Ascending aorta (tissue), 2 donors: ENCODE measurements at regions of chr2 and their contacts with region 1.

Region 1: GRCh38 chr2:20424300-20425290 is 22.3 kb upstream of the RHOB start:
- DNase-seq: peak in 1 of 2 donors; percentile 79
- H3K4me3 ChIP-seq: no peak overlapping the region
- H3K27ac ChIP-seq: peak overlapping the region; percentile 32 to 43
- H3K4me1 ChIP-seq: peaks cover 16 to 19% of the 10 kb centered on the region in 2 donors
- H3K27me3 ChIP-seq: no peaks in the 10 kb centered on the region
- CTCF ChIP-seq: no peak

Region 2: GRCh38 chr2:20242060-20243006 is 182.3 kb before region 1 on chr2:
- intact Hi-C with region 1: no loop called
- DNase-seq: no peak
- H3K4me3 ChIP-seq: no peak overlapping the region
- H3K27ac ChIP-seq: no peak overlapping the region
- H3K4me1 ChIP-seq: no peaks in the 10 kb centered on the region
- H3K27me3 ChIP-seq: no peaks in the 10 kb centered on the region
- CTCF ChIP-seq: peak in 1 of 3 experiments; percentile 32

Region 3: GRCh38 chr2:20350753-20351554 is 73.6 kb before region 1 on chr2 and contains the start of gene PUM2:
- intact Hi-C with region 1: loop called (anchors 2 kb)
- DNase-seq: peak; percentile 82 to 96
- H3K4me3 ChIP-seq: peak within 1 kb of the TSS; percentile 76 to 94
- H3K27ac ChIP-seq: peak within 1 kb of the TSS; percentile 88 to 93
- H3K4me1 ChIP-seq: peaks cover 0 to 29% of the 10 kb centered on the region in 2 donors
- H3K27me3 ChIP-seq: no peaks in the 10 kb centered on the region
- CTCF ChIP-seq: peak in 1 of 3 experiments; percentile 7
- total RNA-seq, gene PUM2: 22.4 TPM

Region 4: GRCh38 chr2:20378792-20379519 is 45.6 kb before region 1 on chr2:
- intact Hi-C with region 1: loop called (anchors 5 kb)
- DNase-seq: peak; percentile 44 to 92
- H3K4me3 ChIP-seq: no peak overlapping the region
- H3K27ac ChIP-seq: peak overlapping the region; percentile 4 to 54
- H3K4me1 ChIP-seq: peaks cover 0 to 6% of the 10 kb centered on the region in 2 donors
- H3K27me3 ChIP-seq: no peaks in the 10 kb centered on the region
- CTCF ChIP-seq: peak; percentile 75 to 93 (median 80)

Region 5: GRCh38 chr2:20438334-20439192 is 14.0 kb after region 1 on chr2:
- intact Hi-C with region 1: loop called (anchors 1 kb)
- DNase-seq: peak in 1 of 2 donors; percentile 88
- H3K4me3 ChIP-seq: peak overlapping the region; percentile 1 to 43
- H3K27ac ChIP-seq: peak overlapping the region; percentile 84 to 89
- H3K4me1 ChIP-seq: peaks cover 7 to 22% of the 10 kb centered on the region in 2 donors
- H3K27me3 ChIP-seq: no peaks in the 10 kb centered on the region
- CTCF ChIP-seq: no peak

Region 6: GRCh38 chr2:20525041-20526035 is 100.7 kb after region 1 on chr2:
- intact Hi-C with region 1: no loop called
- DNase-seq: peak in 1 of 2 donors; percentile 78
- H3K4me3 ChIP-seq: no peak overlapping the region
- H3K27ac ChIP-seq: peak overlapping the region; percentile 19 to 34
- H3K4me1 ChIP-seq: peaks cover 0 to 9% of the 10 kb centered on the region in 2 donors
- H3K27me3 ChIP-seq: no peaks in the 10 kb centered on the region
- CTCF ChIP-seq: no peak